ENCODE measurements at regions of chr2 and their contacts with region 1.

Region 1: DNA sequence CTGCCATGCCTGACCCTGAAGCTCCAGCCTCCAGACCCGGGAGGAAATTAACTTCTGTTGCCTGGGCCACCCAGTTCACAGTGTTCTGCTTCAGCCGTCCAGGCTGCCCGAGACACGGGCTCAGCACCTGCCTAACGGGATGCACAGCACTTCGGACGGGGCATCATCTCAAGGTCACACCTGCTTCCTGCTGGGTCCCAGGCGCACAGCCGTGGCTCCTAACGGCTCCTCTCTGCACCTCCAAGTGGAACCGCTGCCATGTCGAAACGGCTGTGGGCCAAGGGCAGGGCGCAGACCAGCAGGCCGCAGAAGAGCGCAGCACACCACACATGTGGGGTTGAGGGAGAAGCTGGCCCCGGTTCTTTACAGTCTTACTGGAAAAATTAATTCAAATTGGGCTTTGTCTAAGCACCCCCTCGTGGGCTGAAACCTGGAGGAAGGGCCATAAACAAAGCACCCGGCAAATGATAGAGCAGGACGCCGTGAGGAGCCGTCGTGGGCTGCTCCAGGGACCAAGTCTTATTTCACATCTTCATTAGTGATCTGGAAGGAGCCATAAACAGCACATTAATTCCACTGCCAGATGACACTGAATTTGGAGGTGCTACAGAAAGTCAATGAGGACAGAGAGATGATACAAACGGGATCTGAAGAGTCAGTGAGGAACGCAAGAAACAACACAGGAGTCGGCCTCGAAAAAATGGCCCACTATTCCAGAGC is 59.6 kb downstream of the EIPR1 start:
- DNase-seq: no peak
- H3K4me3 ChIP-seq: no peak overlapping the region
- H3K27ac ChIP-seq: no peak overlapping the region
- H3K4me1 ChIP-seq: no peaks in the 10 kb centered on the region
- H3K27me3 ChIP-seq: no peaks in the 10 kb centered on the region
- CTCF ChIP-seq: no peak
- POLR2A ChIP-seq: no peak

Region 2: DNA sequence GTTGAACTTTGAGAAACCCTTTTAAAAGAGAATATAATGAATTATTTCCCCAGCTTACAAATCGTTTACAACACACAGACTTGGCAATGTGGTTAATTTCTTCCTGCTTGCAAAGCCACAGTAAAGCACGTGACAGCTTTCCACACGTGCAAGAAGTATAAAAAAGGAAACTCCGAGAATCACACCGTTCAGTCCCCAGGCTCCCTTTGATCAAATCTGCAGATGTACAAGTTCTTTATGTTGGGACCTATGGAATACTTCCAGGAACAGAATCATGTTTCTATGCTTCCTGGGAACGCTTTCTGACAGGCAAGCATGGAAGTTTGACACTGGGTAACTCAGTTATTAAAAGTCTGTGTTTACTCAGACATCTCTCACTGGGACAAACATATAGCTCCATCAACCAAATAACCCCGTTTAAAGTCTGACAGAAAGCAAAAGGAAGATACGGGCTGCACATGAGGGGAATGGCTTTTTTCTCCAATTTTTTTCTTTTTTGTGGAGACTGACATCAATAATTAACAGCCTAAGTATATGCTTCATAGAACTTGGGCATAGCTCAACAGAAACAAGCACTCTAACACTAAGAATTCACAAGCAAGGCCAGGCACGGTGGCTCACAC is 75.2 kb before region 1 on chr2:
- intact Hi-C with region 1: no loop called
- DNase-seq: no peak
- H3K4me3 ChIP-seq: no peak overlapping the region
- H3K27ac ChIP-seq: no peak overlapping the region
- H3K4me1 ChIP-seq: no peaks in the 10 kb centered on the region
- H3K27me3 ChIP-seq: no peaks in the 10 kb centered on the region
- CTCF ChIP-seq: no peak
- POLR2A ChIP-seq: no peak

Region 3: DNA sequence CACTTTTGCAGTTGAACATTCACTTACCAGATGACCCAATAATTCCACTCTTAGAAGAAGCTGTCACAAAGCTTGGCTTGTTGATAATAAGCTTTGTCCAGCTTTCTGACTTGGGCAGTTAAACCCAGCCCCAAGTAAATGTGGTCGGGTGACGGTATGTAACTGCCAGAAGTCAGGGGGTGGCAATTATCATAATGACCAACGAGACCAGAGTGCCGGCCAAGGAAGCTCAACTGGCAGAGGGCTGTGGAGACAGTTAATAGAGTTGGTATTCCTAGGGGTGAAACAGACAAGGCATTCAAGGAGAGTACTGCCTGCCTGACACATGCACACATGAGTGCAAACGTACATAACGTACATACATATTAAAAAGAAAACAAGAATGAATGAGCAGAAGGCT is 57.1 kb before region 1 on chr2:
- intact Hi-C with region 1: loop called (anchors 2 kb)
- DNase-seq: no peak
- H3K4me3 ChIP-seq: no peak overlapping the region
- H3K27ac ChIP-seq: no peak overlapping the region
- H3K4me1 ChIP-seq: no peaks in the 10 kb centered on the region
- H3K27me3 ChIP-seq: no peaks in the 10 kb centered on the region
- CTCF ChIP-seq: no peak
- POLR2A ChIP-seq: no peak